ENCODE measurements at regions of chr15 and their contacts with region 1.

Region 1: GRCh38 chr15:67240235-67241131 is 14.0 kb downstream of the AAGAB start:
- DNase-seq: peak in 1 of 2 donors; percentile 9
- ATAC-seq: peak; percentile 59
- H3K4me3 ChIP-seq: no peak overlapping the region
- H3K27ac ChIP-seq: peak overlapping the region in 2 of 4 donors; percentile 55 to 56
- H3K4me1 ChIP-seq: peaks cover 30 to 41% of the 10 kb centered on the region in 2 donors
- H3K27me3 ChIP-seq: no peaks in the 10 kb centered on the region
- CTCF ChIP-seq: peak in 4 of 5 experiments; percentile 20 to 35 (median 29)
- POLR2A ChIP-seq: no peak

Region 2: GRCh38 chr15:66621491-66622467 is 618.7 kb before region 1 on chr15:
- in situ Hi-C with region 1: no loop called
- intact Hi-C with region 1: no loop called
- DNase-seq: no peak
- ATAC-seq: no peak
- H3K4me3 ChIP-seq: peak overlapping the region in 3 of 4 donors; percentile 20 to 52 (median 43)
- H3K27ac ChIP-seq: no peak overlapping the region
- H3K4me1 ChIP-seq: peaks cover 4 to 8% of the 10 kb centered on the region in 2 donors
- H3K27me3 ChIP-seq: peaks cover 20 to 32% (median 20%) of the 10 kb centered on the region in 3 donors
- CTCF ChIP-seq: no peak
- POLR2A ChIP-seq: no peak

Region 3: GRCh38 chr15:67134067-67134838 is 106.2 kb before region 1 on chr15:
- in situ Hi-C with region 1: loop called in 1 of 4 experiments (anchors 25 kb)
- intact Hi-C with region 1: no loop called
- DNase-seq: no peak
- ATAC-seq: peak; percentile 30 to 53
- H3K4me3 ChIP-seq: no peak overlapping the region
- H3K27ac ChIP-seq: peak overlapping the region; percentile 72 to 92 (median 78)
- H3K4me1 ChIP-seq: peaks cover 96 to 99% of the 10 kb centered on the region in 2 donors
- H3K27me3 ChIP-seq: no peaks in the 10 kb centered on the region
- CTCF ChIP-seq: no peak
- POLR2A ChIP-seq: peak in 1 of 2 donors; percentile 17

Region 4: GRCh38 chr15:67280217-67280616 is 39.7 kb after region 1 on chr15:
- in situ Hi-C with region 1: no loop called
- intact Hi-C with region 1: no loop called
- DNase-seq: no peak
- ATAC-seq: no peak
- H3K4me3 ChIP-seq: no peak overlapping the region
- H3K27ac ChIP-seq: no peak overlapping the region
- H3K4me1 ChIP-seq: no peaks in the 10 kb centered on the region
- H3K27me3 ChIP-seq: no peaks in the 10 kb centered on the region
- CTCF ChIP-seq: no peak
- POLR2A ChIP-seq: no peak